ENCODE measurements at regions of chr11 and their contacts with region 1.

Region 1: DNA sequence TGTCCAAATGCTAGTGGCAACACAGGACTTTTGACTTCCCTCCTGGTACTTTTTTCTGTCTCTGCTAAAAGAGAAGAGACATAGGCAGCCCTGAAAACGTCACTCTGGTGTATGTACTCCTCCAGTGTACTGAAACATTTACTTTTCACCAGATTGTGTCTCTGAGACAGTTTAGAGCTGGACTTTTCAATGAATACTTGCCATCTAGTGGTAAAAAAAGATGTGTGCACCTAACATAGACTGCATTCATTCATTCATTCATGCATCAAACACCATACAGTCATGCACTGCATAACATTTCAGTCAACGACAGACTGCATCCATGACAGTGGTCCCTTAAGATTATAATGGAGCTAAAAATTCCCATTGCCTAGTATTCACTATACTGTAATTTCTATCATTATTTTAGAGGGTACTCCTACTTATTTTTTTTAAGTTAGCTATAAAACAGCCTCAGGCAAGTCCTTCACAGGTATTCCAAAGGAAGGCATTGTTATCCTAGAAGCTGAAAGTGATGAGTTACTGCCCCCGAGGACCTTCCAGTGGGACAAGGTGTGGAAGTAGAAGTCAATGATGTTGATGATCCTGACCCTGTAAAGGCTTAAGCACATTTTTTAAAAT is 186.2 kb downstream of the SPON1 start:
- DNase-seq: no peak
- ATAC-seq: no peak
- H3K4me3 ChIP-seq: no peak overlapping the region
- H3K27ac ChIP-seq: no peak overlapping the region
- H3K4me1 ChIP-seq: no peaks in the 10 kb centered on the region
- H3K27me3 ChIP-seq: no peaks in the 10 kb centered on the region
- CTCF ChIP-seq: peak in 2 of 5 experiments; percentile 34 to 35
- POLR2A ChIP-seq: no peak

Region 2: GRCh38 chr11:13955971-13956421 is 192.8 kb before region 1 on chr11:
- in situ Hi-C with region 1: loop called in 1 of 4 experiments (anchors 10 kb)
- intact Hi-C with region 1: no loop called
- DNase-seq: peak; percentile 17 to 33
- ATAC-seq: peak in 1 of 2 donors; percentile 51
- H3K4me3 ChIP-seq: no peak overlapping the region
- H3K27ac ChIP-seq: no peak overlapping the region
- H3K4me1 ChIP-seq: no peaks in the 10 kb centered on the region
- H3K27me3 ChIP-seq: peaks cover 1 to 5% (median 4%) of the 10 kb centered on the region in 3 donors
- CTCF ChIP-seq: peak; percentile 44 to 71 (median 68)
- POLR2A ChIP-seq: no peak

Region 3: DNA sequence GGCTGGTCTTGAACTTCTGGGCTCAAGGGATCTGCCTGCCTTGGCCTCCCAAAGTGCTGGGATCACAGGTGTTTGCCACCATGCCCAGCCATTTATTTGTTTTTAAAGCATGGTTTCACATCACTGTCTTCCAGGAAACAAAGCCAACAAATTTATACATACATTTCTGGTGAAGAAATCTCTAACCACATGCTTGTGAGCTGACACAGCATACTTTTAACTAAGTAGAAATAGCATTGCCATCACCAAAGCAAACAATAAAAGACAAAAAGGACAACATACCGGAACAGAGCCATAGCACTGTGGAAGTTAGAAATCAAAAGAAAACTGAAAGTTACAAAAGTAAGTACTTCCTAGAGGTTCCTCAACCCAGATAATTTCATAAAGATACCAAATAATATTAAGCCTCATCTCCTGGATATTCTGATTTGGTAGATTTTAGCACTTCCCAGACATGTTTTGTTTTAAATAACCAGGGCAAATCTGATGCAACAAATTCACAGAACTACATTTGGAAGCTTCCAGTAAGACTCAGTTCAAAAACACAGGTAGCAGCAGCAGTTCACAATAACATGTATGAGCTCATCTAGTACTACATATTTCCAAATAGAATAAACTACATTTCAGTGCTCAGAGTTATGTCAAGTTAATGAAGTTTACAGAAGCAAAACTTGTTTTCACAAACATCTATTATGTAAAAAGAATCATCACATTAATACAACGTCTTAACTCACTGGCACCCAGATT is 139.6 kb after region 1 on chr11:
- in situ Hi-C with region 1: no loop called
- intact Hi-C with region 1: no loop called
- DNase-seq: no peak
- ATAC-seq: no peak
- H3K4me3 ChIP-seq: no peak overlapping the region
- H3K27ac ChIP-seq: no peak overlapping the region
- H3K4me1 ChIP-seq: no peaks in the 10 kb centered on the region
- H3K27me3 ChIP-seq: no peaks in the 10 kb centered on the region
- CTCF ChIP-seq: no peak
- POLR2A ChIP-seq: no peak

Measured in gastrocnemius medialis (tissue), 4 donors.